ENCODE measurements at regions of chr11 and their contacts with region 1.

Region 1: DNA sequence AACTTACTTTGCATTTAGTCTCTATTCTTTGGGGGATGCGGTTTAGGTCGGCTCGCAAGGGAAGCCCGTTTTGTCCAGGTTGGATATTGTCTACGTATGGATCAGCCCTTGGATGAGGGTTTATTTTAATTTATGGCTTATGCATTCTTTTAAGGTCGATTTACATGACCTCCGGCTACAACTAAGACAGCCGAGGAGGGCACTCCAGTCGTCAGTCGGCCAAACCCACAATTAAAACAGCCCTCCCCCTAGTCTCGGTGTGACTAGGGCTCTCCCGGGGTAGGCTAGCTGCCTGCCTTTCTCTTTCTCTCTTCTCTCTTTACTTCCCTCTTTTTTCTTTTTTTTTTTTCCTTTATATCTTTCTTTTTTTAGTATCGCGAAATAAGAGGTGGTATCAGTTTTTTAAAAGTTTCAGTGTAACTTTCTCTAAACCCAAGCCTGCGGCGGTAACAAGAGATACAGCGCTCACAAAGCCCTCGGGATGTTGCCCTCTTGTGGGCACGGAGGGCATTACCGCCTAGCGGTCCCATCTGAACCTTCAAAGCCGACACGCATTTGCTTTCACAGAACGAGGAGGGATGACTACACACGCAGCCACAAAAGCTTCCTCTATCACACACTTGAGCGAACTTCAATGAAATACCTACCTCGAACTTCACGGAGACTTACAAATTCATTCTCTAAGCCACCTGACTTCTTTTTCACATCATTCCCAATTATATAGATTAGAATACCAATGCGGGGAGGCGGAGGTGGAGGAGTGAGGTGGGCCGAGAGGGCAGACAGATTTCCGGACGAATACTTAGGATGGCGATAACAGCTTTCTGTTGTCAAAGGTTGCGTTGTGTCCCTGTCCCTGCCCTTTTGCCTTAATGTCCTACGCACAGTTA is 132.3 kb upstream of the C11orf58 start:
- DNase-seq: peak; percentile 94
- ATAC-seq: peak; percentile 60

Region 2: DNA sequence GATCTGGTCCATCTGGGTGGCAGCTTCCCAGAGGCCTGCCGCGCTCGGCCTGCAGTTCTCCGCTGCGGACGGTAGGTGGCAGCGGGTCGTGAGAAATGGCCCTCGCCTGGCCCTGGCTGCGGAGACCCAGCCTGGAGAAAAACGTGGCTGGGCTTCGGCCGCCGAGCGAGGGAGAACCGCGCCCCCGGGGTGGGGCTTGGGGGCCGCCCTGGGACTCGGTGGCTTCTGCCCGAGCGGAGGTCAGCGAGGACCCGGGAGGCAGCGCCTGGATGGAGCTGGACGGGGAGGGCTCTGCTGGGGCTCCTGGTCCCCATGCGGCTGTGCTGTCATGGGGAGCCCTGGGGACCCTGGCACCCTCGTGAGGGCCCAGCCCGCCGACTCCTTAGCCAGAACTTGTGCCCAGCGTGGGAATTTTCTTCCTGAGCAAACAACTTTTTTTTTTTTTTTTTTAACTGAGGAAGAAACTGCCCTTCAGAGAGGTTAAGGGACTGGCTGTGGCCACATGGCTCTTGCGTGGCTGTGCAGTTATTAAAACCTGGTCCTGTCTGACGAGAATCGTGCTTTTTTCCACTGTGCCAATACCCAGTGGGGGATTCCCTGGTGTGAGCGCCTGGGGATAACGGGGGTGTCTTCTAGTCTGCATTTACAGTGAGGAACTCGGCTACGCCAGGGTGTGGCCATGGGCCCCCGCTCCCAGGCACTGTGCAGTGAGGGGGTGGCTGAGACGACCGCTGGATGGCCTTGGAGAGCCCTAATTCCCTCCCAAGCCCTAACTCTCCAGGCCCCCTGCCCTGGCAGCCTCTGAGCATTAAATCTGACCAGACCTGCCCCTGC is 955.8 kb before region 1 on chr11:
- intact Hi-C with region 1: loop called (anchors 5 kb)
- DNase-seq: peak; percentile 98
- ATAC-seq: peak; percentile 99

Region 3: GRCh38 chr11:16191212-16191867 is 414.8 kb before region 1 on chr11:
- intact Hi-C with region 1: loop called (anchors 10 kb)
- DNase-seq: no peak
- ATAC-seq: peak; percentile 37

Measured in left ventricle myocardium superior (tissue), 1 donor.